CD8-positive, alpha-beta T cell (primary cell): ENCODE measurements at regions of chr11 and their contacts with region 1.

Region 1: GRCh38 chr11:121591405-121592033 is 138.8 kb upstream of the SORL1-AS1 start:
- DNase-seq: peak; percentile 40 to 85 (median 69)
- ATAC-seq: peak; percentile 92
- H3K4me3 ChIP-seq: no peak overlapping the region
- H3K4me3 Mint-ChIP-seq: no peak overlapping the region
- H3K27ac ChIP-seq: peak overlapping the region in 1 of 2 experiments; percentile 37
- H3K27ac Mint-ChIP-seq: no peak overlapping the region
- H3K4me1 ChIP-seq: no peaks in the 10 kb centered on the region
- H3K4me1 Mint-ChIP-seq: peaks cover 5% of the 10 kb centered on the region
- H3K27me3 ChIP-seq: no peaks in the 10 kb centered on the region
- H3K27me3 Mint-ChIP-seq: no peaks in the 10 kb centered on the region
- CTCF ChIP-seq: peak; percentile 82

Region 2: DNA sequence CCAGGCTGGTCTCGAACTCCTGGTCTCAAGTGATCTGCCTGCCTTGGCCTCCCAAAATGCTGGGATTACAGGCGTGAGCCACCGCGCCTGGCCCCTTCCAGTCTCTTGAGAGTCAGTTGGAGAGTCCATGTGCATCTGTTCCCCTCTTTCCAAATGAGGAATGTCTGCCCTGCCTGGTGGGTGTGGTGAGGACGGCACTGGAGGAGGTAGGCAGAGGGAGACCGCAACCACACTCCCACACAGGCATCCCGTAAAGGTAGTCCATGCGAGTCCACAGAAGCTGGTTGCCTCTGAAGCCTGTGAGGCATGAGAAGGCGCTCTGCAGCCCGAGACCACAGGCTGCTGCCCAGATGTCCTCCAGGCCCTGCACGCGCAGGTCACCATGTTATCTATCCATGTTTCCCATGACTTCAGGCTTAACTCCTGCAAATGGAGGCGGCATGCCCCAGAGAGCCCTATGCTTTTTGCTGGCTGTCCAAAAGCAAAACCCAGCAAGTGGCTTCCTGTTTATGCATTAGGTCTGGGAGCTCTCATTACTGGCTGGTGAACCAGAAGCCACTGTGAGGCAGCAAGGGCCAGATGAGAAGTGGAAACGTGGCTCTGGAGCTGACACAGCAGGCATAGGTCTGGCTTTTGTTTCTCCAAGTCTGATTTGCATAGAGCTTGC is 1036.6 kb before region 1 on chr11:
- CTCF ChIA-PET with region 1: no interaction called
- POLR2A ChIA-PET with region 1: no interaction called
- intact Hi-C with region 1: no loop called
- DNase-seq: no peak
- ATAC-seq: no peak
- H3K4me3 ChIP-seq: no peak overlapping the region
- H3K4me3 Mint-ChIP-seq: no peak overlapping the region
- H3K27ac ChIP-seq: no peak overlapping the region
- H3K27ac Mint-ChIP-seq: no peak overlapping the region
- H3K4me1 ChIP-seq: no peaks in the 10 kb centered on the region
- H3K4me1 Mint-ChIP-seq: no peaks in the 10 kb centered on the region
- H3K27me3 ChIP-seq: no peaks in the 10 kb centered on the region
- H3K27me3 Mint-ChIP-seq: peaks cover 22% of the 10 kb centered on the region
- CTCF ChIP-seq: no peak

Region 3: GRCh38 chr11:120929664-120930154 is 661.8 kb before region 1 on chr11:
- CTCF ChIA-PET with region 1: no interaction called
- POLR2A ChIA-PET with region 1: no interaction called
- intact Hi-C with region 1: loop called in 1 of 2 experiments (anchors 5 kb)
- DNase-seq: peak in 6 of 9 experiments; percentile 9 to 70 (median 46)
- ATAC-seq: no peak
- H3K4me3 ChIP-seq: no peak overlapping the region
- H3K4me3 Mint-ChIP-seq: no peak overlapping the region
- H3K27ac ChIP-seq: no peak overlapping the region
- H3K27ac Mint-ChIP-seq: no peak overlapping the region
- H3K4me1 ChIP-seq: no peaks in the 10 kb centered on the region
- H3K4me1 Mint-ChIP-seq: no peaks in the 10 kb centered on the region
- H3K27me3 ChIP-seq: peaks cover 0 to 4% of the 10 kb centered on the region in 2 experiments
- H3K27me3 Mint-ChIP-seq: peaks cover 11% of the 10 kb centered on the region
- CTCF ChIP-seq: peak; percentile 47

Region 4: DNA sequence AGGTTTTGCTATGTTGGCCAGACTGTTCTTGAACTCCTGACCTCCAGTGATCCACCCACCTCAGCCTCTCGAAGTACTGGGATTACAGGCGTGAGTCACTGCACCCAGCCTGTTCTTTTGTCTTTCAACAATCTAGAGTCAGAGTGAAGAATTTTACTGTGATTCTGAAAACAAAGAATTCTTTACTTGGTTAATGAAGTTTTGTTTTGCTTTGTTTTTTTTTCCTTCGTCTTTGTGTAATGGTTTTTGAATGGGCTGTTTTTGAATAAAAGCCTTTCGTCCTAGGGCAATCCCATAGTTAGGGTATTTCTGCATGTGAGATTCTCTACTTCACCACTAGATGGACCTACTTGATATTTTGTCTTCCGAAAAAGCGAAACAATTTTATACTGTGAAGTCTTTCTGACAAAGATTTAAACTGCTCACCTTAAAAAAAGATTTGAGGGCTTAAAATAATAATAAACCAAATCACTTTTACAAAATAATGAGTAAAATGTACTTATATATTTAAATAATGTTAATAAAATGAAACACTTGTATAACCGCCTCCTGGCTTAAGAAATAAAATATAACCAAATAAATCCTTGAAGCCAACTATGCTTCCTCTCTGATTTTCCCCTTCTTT is 342.4 kb before region 1 on chr11:
- CTCF ChIA-PET with region 1: interaction called, 10 read pairs
- POLR2A ChIA-PET with region 1: no interaction called
- intact Hi-C with region 1: loop called (anchors 1 kb)
- DNase-seq: peak in 2 of 9 experiments; percentile 44 to 66
- ATAC-seq: peak; percentile 80
- H3K4me3 ChIP-seq: no peak overlapping the region
- H3K4me3 Mint-ChIP-seq: no peak overlapping the region
- H3K27ac ChIP-seq: no peak overlapping the region
- H3K27ac Mint-ChIP-seq: no peak overlapping the region
- H3K4me1 ChIP-seq: no peaks in the 10 kb centered on the region
- H3K4me1 Mint-ChIP-seq: peaks cover 5% of the 10 kb centered on the region
- H3K27me3 ChIP-seq: no peaks in the 10 kb centered on the region
- H3K27me3 Mint-ChIP-seq: peaks cover 9% of the 10 kb centered on the region
- CTCF ChIP-seq: peak; percentile 94

Region 5: DNA sequence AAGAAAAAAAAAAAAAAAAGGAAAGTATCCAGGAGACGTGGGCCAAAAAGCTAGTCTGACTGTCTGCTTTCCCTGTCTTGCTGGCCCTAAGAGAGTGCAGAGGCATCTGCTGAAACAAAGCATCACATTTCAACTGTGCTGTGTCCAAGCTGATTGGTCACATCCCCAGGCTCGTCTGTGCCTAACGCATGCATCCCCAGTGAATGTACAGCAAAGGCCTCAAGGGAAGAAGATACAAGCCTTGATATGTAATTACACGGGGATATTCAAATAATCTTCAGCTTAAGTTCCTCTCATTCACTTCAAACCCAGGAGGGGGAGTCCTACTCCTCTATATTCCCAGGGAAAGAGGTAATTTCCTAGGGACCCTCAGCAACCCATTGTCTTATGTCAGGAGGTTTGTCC is 144.8 kb before region 1 on chr11:
- CTCF ChIA-PET with region 1: interaction called, 11 read pairs
- POLR2A ChIA-PET with region 1: interaction called, 7 read pairs
- intact Hi-C with region 1: loop called in 1 of 2 experiments (anchors 1 kb)
- DNase-seq: no peak
- ATAC-seq: no peak
- H3K4me3 ChIP-seq: no peak overlapping the region
- H3K4me3 Mint-ChIP-seq: no peak overlapping the region
- H3K27ac ChIP-seq: no peak overlapping the region
- H3K27ac Mint-ChIP-seq: peak overlapping the region; percentile 92
- H3K4me1 ChIP-seq: peaks cover 82% of the 10 kb centered on the region
- H3K4me1 Mint-ChIP-seq: peaks cover 85% of the 10 kb centered on the region
- H3K27me3 ChIP-seq: no peaks in the 10 kb centered on the region
- H3K27me3 Mint-ChIP-seq: no peaks in the 10 kb centered on the region
- CTCF ChIP-seq: no peak

Region 6: GRCh38 chr11:121575250-121575962 is 16.1 kb before region 1 on chr11:
- CTCF ChIA-PET with region 1: interaction called, 14 read pairs
- POLR2A ChIA-PET with region 1: interaction called, 7 read pairs
- intact Hi-C with region 1: no loop called
- DNase-seq: peak in 1 of 9 experiments; percentile 43
- ATAC-seq: no peak
- H3K4me3 ChIP-seq: no peak overlapping the region
- H3K4me3 Mint-ChIP-seq: no peak overlapping the region
- H3K27ac ChIP-seq: no peak overlapping the region
- H3K27ac Mint-ChIP-seq: peak overlapping the region; percentile 70
- H3K4me1 ChIP-seq: no peaks in the 10 kb centered on the region
- H3K4me1 Mint-ChIP-seq: no peaks in the 10 kb centered on the region
- H3K27me3 ChIP-seq: no peaks in the 10 kb centered on the region
- H3K27me3 Mint-ChIP-seq: no peaks in the 10 kb centered on the region
- CTCF ChIP-seq: no peak